Heart right ventricle (tissue), 16 donors: ENCODE measurements at regions of chr1 and their contacts with region 1.

Region 1: DNA sequence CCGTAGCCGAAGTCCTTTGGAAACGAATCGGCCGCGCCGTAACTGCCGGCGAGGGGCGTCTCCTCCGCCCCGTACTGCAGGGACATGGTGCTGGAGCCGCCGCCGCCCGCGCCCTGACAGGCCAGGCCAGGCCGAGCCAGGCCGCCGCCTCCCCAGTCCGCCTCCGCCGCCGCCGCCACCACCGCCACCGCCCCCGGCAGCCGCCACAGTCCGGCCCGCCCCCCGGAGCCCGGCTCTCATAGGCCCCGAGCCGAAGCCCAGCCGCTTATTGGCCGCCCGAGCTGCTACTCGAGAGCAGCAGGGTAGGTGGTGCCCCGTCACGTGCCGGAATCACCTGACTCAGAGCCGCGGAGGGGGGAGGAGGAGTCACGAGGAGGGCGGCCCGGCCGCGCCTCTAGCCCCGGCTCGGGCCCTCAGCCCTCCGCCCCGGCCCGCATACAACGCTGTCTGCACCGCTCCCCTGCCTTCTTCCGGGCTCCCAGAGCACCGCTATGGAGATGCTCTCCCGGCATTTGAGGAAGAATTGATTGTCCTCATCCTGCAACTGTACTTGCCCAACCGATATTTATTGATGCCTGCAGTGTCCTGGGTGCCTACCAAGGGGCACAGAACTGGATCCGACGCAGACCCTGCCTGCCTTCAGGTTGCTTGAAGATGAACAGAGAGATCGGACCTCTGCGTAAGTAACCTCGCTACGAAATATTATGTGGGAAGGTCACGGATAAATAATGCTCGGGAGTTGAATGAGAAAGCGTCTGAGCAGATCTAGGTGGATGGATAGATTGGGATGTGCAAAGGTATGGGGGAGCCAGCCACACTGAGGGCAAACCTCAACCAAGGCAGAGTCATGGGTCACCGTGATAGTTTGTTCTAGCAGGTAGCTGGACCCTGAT is at the start of gene RRAGC:
- DNase-seq: peak; percentile 100
- ATAC-seq: peak; percentile 97 to 99 (median 98)
- H3K4me3 ChIP-seq: peak within 1 kb of the TSS; percentile 74 to 98 (median 95)
- H3K27ac ChIP-seq: peak within 1 kb of the TSS; percentile 32 to 93 (median 90)
- H3K4me1 ChIP-seq: peaks cover 0 to 81% (median 60%) of the 10 kb centered on the region in 9 donors
- H3K27me3 ChIP-seq: no peaks in the 10 kb centered on the region
- CTCF ChIP-seq: no peak
- total RNA-seq, gene RRAGC: 20.3 to 32.3 (median 23.2) TPM

Region 2: GRCh38 chr1:38662126-38662525 is 197.7 kb before region 1 on chr1:
- intact Hi-C with region 1: no loop called
- DNase-seq: no peak
- ATAC-seq: no peak
- H3K4me3 ChIP-seq: no peak overlapping the region
- H3K27ac ChIP-seq: no peak overlapping the region
- H3K4me1 ChIP-seq: no peaks in the 10 kb centered on the region
- H3K27me3 ChIP-seq: peaks cover 0 to 50% (median 32%) of the 10 kb centered on the region in 7 donors
- CTCF ChIP-seq: no peak

Region 3: DNA sequence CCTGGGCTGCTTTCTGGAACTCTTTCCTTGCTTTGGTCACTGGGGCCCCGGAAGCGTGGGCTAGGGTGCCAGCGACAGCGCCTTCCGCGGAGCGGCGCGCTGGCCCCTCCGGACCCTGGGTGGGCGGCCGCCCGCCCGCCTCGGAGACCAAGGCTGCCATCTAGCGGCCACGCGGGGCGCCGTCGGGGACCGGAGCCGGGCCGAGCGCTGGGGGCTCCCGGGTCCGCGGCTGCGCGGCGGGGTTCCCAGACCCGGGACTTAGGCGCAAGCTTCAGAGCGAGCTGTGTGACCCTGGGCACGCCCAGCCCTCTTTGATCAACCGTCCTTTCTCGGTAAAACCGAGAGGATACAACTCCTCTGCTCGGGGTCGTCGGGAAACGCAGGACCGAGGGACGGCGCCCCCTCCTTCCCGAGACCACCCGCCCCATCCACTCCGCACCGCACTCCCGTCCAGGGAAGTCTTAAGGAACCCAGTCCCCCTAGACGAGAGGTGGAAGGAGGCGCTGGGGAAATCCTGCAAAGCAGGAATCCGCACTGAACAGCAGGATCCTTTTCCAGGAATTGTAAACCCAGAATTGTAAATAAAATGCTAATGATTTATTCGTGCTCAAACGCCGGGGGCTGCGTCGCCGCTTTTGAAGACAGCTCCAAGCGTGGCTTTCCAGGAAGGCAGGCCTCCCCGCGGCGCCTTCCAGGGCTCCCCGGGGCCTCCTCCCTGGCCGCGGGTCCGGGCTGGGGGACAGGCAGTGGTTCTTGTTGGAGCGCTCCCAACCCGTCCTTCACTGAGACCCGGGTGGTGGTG is 41.4 kb before region 1 on chr1:
- intact Hi-C with region 1: no loop called
- DNase-seq: peak in 1 of 2 donors; percentile 36
- ATAC-seq: peak in 6 of 8 donors; percentile 50 to 82 (median 67)
- H3K4me3 ChIP-seq: peak overlapping the region in 8 of 10 donors; percentile 4 to 42 (median 32)
- H3K27ac ChIP-seq: no peak overlapping the region
- H3K4me1 ChIP-seq: peaks cover 0 to 17% (median 11%) of the 10 kb centered on the region in 9 donors
- H3K27me3 ChIP-seq: peaks cover 2 to 88% (median 66%) of the 10 kb centered on the region in 7 donors
- CTCF ChIP-seq: peak; percentile 64 to 90 (median 80)

Region 4: DNA sequence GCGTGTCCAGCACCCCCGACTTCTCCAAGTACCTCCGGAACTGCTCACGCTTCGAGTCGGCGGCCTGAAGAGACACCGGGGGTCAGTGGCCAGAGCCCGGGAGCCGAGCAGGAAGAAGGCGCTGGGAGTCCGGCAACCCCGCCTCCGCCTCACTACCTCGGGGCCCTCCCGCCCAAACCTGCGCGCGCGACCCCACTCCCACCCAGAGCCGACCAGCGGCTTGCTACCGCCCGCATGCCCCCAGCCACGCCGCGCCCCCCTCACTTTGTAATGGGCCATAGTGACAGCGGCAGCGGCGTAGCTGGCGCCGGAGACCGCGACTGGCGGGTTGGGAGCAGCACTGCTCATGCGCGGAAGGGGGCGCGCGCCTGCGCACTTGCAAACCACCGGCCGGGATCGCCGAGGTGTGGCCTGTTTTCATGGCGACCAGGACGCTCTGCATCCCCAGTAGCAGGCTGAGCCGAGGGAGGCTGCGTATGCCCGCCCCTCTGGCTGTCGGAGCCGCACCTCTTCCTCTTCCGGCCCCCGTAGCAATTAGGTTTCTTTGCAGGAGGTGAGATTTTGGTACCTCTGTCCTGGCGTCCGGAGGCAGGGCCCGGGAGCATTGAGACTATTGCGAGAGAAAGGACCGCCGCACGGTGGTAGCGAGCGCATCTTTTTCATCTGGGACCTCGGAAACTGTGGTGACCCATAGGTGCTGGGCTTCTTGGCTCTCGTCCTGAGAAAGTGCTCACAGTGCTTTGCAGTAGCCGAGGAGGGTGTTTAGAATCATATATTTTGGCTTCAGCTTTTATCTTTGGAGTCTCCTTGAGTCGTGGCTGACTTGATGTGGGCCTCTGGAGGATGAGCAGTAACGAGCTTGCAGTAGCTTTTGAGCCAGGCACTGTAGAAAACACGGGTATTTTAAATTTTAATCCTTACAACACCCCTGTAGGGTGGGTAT is 13.5 kb after region 1 on chr1 and contains the start of gene MYCBP:
- intact Hi-C with region 1: loop called in 1 of 10 experiments (anchors 1 kb)
- DNase-seq: peak; percentile 95 to 97
- ATAC-seq: peak; percentile 99 to 100 (median 100)
- H3K4me3 ChIP-seq: peak within 1 kb of the TSS; percentile 50 to 96 (median 82)
- H3K27ac ChIP-seq: peak within 1 kb of the TSS in 9 of 10 donors; percentile 56 to 86 (median 73)
- H3K4me1 ChIP-seq: peaks cover 5 to 35% (median 24%) of the 10 kb centered on the region in 9 donors
- H3K27me3 ChIP-seq: no peaks in the 10 kb centered on the region
- CTCF ChIP-seq: peak in 6 of 9 donors; percentile 14 to 44 (median 28)
- total RNA-seq, gene MYCBP: 5.4 to 22.8 (median 8.2) TPM

Region 5: GRCh38 chr1:39003794-39004193 is 144.0 kb after region 1 on chr1:
- intact Hi-C with region 1: loop called in 4 of 10 experiments (anchors 10 kb)
- DNase-seq: no peak
- ATAC-seq: no peak
- H3K4me3 ChIP-seq: no peak overlapping the region
- H3K27ac ChIP-seq: peak overlapping the region in 8 of 10 donors; percentile 7 to 75 (median 62)
- H3K4me1 ChIP-seq: peaks cover 0 to 25% (median 18%) of the 10 kb centered on the region in 9 donors
- H3K27me3 ChIP-seq: no peaks in the 10 kb centered on the region
- CTCF ChIP-seq: no peak

Region 6: GRCh38 chr1:39081266-39082009 is 221.6 kb after region 1 on chr1:
- intact Hi-C with region 1: loop called in 4 of 10 experiments (anchors 5 to 10 kb)
- DNase-seq: peak in 1 of 2 donors; percentile 30
- ATAC-seq: peak in 3 of 8 donors; percentile 42 to 54 (median 46)
- H3K4me3 ChIP-seq: peak overlapping the region; percentile 27 to 68 (median 56)
- H3K27ac ChIP-seq: no peak overlapping the region
- H3K4me1 ChIP-seq: peaks cover 3 to 26% (median 18%) of the 10 kb centered on the region in 9 donors
- H3K27me3 ChIP-seq: peaks cover 0 to 43% (median 8%) of the 10 kb centered on the region in 7 donors
- CTCF ChIP-seq: peak in 1 of 9 donors; percentile 11

Region 7: GRCh38 chr1:39091845-39092645 is 232.2 kb after region 1 on chr1:
- intact Hi-C with region 1: loop called in 5 of 10 experiments (anchors 5 to 10 kb)
- DNase-seq: peak; percentile 67 to 68
- ATAC-seq: peak in 7 of 8 donors; percentile 66 to 80 (median 76)
- H3K4me3 ChIP-seq: no peak overlapping the region
- H3K27ac ChIP-seq: peak overlapping the region in 1 of 10 donors; percentile 1
- H3K4me1 ChIP-seq: peaks cover 0 to 32% (median 6%) of the 10 kb centered on the region in 9 donors
- H3K27me3 ChIP-seq: no peaks in the 10 kb centered on the region
- CTCF ChIP-seq: peak; percentile 24 to 81 (median 70)